Lower leg skin (tissue), 4 donors: ENCODE measurements at regions of chr5 and their contacts with region 1.

Region 1: GRCh38 chr5:58460732-58461286 is 923 bp upstream of the PLK2 start:
- DNase-seq: peak; percentile 89 to 99
- H3K4me3 ChIP-seq: peak overlapping the region; percentile 44
- CTCF ChIP-seq: peak in 1 of 3 donors; percentile 80
- POLR2A ChIP-seq: no peak

Region 2: GRCh38 chr5:56900858-56901578 is 1559.8 kb before region 1 on chr5:
- intact Hi-C with region 1: loop called (anchors 5 kb)
- DNase-seq: peak in 1 of 2 donors; percentile 29
- H3K4me3 ChIP-seq: no peak overlapping the region
- CTCF ChIP-seq: no peak
- POLR2A ChIP-seq: no peak

Region 3: GRCh38 chr5:57298295-57298984 is 1162.4 kb before region 1 on chr5:
- intact Hi-C with region 1: loop called (anchors 5 kb)
- DNase-seq: peak; percentile 83 to 93
- H3K4me3 ChIP-seq: no peak overlapping the region
- CTCF ChIP-seq: no peak
- POLR2A ChIP-seq: no peak

Region 4: GRCh38 chr5:57887851-57888621 is 572.8 kb before region 1 on chr5:
- intact Hi-C with region 1: loop called (anchors 5 kb)
- DNase-seq: peak in 1 of 2 donors; percentile 34
- H3K4me3 ChIP-seq: no peak overlapping the region
- CTCF ChIP-seq: no peak
- POLR2A ChIP-seq: no peak